HAP-1 (cell line): ENCODE measurements at regions of chrX and their contacts with region 1.

Region 1: GRCh38 chrX:51779306-51779705 is 36.1 kb downstream of the GSPT2 start:
- DNase-seq: no peak
- H3K4me3 ChIP-seq: no peak overlapping the region
- H3K4me1 ChIP-seq: no peaks in the 10 kb centered on the region
- H3K27me3 ChIP-seq: peaks cover 12% of the 10 kb centered on the region

Region 2: DNA sequence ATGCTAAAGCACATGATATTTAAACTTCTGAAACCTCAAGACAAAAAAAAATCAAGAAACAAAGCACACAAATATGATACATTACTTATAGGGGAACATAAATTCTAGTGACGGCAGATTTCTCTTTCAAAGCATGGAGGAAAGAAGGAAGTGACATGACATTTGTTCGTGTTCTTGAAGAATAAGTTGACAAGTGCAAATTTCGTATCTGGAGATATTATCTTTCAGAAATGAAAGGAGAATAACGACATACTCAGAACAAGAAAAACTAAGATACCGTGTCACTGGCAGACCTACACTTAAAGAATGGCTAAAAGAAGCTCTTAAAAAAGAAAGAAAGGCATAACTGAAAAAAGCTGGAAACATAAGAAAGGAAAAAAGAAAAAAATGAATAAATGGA is 113.3 kb before region 1 on chrX:
- in situ Hi-C with region 1: loop called (anchors 25 kb)
- DNase-seq: no peak
- H3K4me3 ChIP-seq: no peak overlapping the region
- H3K4me1 ChIP-seq: no peaks in the 10 kb centered on the region
- H3K27me3 ChIP-seq: no peaks in the 10 kb centered on the region